ENCODE measurements at regions of chr10 and their contacts with region 1.

Region 1: DNA sequence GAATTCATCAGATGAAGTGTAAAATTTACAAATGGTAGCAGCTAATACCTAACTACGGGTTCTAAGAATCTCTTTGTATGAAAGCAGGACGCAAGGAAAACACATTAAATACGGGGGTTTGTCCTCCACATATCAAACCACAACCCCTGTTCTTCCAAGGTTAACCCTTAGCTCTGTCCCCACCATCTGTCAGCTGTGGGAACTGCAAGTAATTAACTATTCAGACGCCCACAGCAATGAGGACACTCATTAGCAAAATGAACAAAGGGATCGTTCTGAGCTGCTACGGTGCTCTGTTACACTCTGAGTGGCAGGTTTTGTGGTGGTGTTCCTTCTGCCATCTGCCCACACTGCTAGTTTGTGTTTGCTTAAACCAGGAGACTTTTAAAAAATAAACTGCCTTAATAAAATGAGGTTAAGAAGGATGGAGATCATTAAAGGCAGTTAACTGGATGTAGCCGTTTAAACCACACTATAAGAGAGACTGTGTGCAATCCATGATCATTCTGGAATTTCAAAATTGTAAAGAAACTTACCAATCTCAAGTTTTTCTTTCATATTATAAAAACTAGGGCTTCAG is 51.4 kb downstream of the C10orf67 start:
- DNase-seq: no peak
- ATAC-seq: peak; percentile 47
- H3K4me3 Mint-ChIP-seq: no peak overlapping the region
- H3K27ac Mint-ChIP-seq: no peak overlapping the region
- H3K4me1 Mint-ChIP-seq: no peaks in the 10 kb centered on the region
- H3K27me3 Mint-ChIP-seq: peaks cover 23% of the 10 kb centered on the region
- CTCF ChIP-seq: no peak

Region 2: DNA sequence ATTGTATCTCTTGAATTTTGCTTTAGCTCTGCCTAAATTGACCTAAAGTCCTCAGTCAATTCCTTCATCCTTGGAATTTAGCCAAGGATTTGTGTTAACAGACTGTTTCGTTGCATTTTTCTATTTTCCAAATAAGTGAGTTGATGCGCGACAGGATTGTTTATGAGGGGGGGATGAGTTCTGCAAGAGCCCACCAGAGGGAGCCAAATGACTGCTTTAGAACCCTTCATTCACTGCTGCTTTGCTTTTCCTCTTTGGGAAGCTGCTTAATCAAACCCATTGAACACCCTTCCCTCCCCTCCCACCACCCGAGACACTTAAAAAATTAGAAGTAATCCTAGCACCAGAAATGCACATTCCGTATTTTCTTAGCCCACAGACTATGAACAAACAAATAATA is 134.9 kb before region 1 on chr10:
- CTCF ChIA-PET with region 1: interaction called, 4 read pairs
- POLR2A ChIA-PET with region 1: no interaction called
- intact Hi-C with region 1: loop called (anchors 1 kb)
- DNase-seq: no peak
- ATAC-seq: peak; percentile 66
- H3K4me3 Mint-ChIP-seq: no peak overlapping the region
- H3K27ac Mint-ChIP-seq: no peak overlapping the region
- H3K4me1 Mint-ChIP-seq: peaks cover 3% of the 10 kb centered on the region
- H3K27me3 Mint-ChIP-seq: peaks cover 21% of the 10 kb centered on the region
- CTCF ChIP-seq: peak; percentile 92

Region 3: DNA sequence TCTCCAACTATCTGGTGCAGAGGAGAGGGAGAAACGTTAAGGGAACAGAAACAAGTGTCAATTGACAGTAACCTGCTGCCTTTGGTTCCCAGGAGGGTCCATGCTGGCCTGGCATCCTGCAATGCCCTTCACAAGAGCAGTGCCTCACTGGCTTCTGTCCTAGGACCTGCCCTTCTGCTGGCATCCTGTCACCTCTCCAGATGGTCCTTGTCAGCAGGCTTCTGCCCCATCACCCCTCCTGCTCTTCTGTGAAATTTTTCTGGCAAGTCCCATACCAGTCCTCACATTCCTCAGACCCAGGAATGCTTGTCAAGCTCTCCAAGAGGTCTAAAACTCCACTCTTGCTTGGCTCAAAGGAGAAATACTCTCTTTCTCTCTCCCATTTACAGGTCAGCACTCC is 17.2 kb after region 1 on chr10:
- CTCF ChIA-PET with region 1: no interaction called
- POLR2A ChIA-PET with region 1: no interaction called
- intact Hi-C with region 1: no loop called
- DNase-seq: no peak
- ATAC-seq: no peak
- H3K4me3 Mint-ChIP-seq: no peak overlapping the region
- H3K27ac Mint-ChIP-seq: no peak overlapping the region
- H3K4me1 Mint-ChIP-seq: no peaks in the 10 kb centered on the region
- H3K27me3 Mint-ChIP-seq: peaks cover 4% of the 10 kb centered on the region
- CTCF ChIP-seq: no peak

Region 4: DNA sequence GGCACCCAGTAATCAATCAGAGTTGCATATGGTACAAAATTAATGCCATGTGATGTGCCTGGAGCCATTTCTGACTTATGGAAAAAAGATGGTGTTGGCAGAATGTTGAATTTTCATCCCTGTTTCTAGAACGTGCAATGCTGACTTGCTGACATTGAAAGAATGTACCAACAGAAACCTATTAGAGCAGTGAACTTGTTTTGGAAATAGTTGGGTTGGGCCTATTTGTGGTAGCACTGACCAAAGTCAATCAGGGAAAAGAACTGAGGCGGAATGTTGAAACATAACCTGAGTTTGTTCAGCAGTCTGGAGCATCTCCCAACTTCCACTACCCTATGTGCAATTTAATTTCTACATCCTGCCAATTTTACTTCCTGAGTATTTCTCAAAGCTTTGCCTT is 904.0 kb after region 1 on chr10:
- CTCF ChIA-PET with region 1: no interaction called
- POLR2A ChIA-PET with region 1: no interaction called
- intact Hi-C with region 1: loop called (anchors 5 kb)
- DNase-seq: no peak
- ATAC-seq: no peak
- H3K4me3 Mint-ChIP-seq: no peak overlapping the region
- H3K27ac Mint-ChIP-seq: no peak overlapping the region
- H3K4me1 Mint-ChIP-seq: no peaks in the 10 kb centered on the region
- H3K27me3 Mint-ChIP-seq: peaks cover 4% of the 10 kb centered on the region
- CTCF ChIP-seq: no peak

Region 5: GRCh38 chr10:24556750-24557742 is 1263.8 kb after region 1 on chr10:
- CTCF ChIA-PET with region 1: no interaction called
- POLR2A ChIA-PET with region 1: no interaction called
- intact Hi-C with region 1: loop called (anchors 10 kb)
- DNase-seq: no peak
- ATAC-seq: no peak
- H3K4me3 Mint-ChIP-seq: no peak overlapping the region
- H3K27ac Mint-ChIP-seq: no peak overlapping the region
- H3K4me1 Mint-ChIP-seq: no peaks in the 10 kb centered on the region
- H3K27me3 Mint-ChIP-seq: peaks cover 5% of the 10 kb centered on the region
- CTCF ChIP-seq: no peak